HEK293T (cell line): ENCODE measurements at regions of chr11 and their contacts with region 1.

Region 1: DNA sequence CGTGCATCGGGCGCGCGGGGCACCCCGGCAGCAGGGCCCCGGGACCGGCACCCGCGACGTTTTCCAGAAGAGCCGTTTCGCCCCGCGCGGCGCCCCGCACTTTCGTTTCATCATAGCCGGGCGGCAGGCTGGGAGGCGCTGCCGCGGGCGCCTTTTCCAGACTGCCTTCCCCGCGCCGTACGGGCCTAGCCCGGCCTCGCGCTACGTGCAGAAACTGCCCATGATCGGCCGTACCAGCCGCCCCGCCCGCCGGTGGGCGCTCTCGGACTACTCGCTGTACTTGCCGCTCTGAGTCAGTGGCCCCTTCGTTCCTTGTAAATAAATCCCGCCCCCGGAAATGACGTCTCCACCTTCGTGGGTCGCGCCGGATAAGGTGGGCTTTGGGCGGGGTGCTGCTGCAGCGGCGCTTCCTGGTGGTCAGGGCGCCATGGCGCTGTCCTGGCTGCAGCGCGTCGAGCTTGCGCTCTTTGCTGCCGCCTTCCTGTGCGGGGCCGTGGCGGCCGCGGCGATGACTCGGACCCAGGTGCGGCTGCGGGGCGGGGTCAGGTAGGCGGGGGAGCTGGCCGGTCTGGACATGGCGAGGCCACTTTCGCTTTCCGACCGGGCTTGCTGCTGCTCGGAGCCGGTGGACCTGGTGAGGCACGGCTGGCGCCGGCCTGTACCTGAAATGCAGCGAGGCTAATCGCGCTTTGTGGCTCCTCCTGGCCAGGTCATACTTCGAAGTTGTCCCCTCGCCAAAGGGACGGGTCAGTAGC is at the start of gene TMEM179B:
- DNase-seq: peak; percentile 91

Region 2: DNA sequence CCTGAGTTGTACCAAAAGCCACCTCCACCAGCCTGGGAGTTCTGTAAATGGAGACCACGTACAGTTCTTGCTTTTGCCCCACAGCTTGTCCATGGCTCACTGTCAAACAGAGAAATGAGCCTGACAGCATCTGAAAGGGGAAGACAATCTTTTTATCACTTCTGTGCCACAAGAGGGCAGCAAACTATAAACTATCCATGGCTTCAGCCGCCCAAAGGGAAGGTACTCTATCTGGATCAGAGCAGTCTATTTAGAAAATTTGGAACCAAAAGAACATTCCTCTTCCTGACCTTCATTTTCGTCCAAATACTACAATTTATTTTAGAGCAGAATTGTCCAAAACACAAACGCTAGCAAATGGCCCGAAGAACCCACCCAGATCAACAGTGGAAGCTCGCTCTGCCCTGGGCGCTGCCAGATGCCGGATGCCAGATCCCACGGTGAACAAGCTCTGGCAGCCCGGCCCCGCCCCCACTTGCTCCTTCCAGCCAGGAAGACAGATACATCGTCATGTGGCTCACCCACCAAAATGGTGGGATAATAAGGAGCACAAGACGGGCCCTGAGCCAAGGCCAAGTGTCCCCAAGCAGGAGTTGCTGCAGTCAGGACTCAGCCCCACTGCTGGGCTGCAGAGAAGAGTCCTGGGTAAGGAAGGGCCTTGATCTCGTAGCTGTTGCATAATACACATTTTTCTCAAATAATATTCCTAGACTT is 392.2 kb before region 1 on chr11:
- CTCF ChIA-PET with region 1: no interaction called
- POLR2A ChIA-PET with region 1: no interaction called
- DNase-seq: peak; percentile 74

Region 3: GRCh38 chr11:62753736-62754603 is 33.2 kb before region 1 on chr11 and contains the start of gene ZBTB3:
- CTCF ChIA-PET with region 1: interaction called, 6 read pairs
- POLR2A ChIA-PET with region 1: interaction called, 29 read pairs
- DNase-seq: peak; percentile 94

Region 4: GRCh38 chr11:62771144-62772021 is 15.8 kb before region 1 on chr11 and contains the start of gene TAF6L:
- CTCF ChIA-PET with region 1: interaction called, 16 read pairs
- POLR2A ChIA-PET with region 1: interaction called, 17 read pairs
- DNase-seq: peak; percentile 92

Region 5: DNA sequence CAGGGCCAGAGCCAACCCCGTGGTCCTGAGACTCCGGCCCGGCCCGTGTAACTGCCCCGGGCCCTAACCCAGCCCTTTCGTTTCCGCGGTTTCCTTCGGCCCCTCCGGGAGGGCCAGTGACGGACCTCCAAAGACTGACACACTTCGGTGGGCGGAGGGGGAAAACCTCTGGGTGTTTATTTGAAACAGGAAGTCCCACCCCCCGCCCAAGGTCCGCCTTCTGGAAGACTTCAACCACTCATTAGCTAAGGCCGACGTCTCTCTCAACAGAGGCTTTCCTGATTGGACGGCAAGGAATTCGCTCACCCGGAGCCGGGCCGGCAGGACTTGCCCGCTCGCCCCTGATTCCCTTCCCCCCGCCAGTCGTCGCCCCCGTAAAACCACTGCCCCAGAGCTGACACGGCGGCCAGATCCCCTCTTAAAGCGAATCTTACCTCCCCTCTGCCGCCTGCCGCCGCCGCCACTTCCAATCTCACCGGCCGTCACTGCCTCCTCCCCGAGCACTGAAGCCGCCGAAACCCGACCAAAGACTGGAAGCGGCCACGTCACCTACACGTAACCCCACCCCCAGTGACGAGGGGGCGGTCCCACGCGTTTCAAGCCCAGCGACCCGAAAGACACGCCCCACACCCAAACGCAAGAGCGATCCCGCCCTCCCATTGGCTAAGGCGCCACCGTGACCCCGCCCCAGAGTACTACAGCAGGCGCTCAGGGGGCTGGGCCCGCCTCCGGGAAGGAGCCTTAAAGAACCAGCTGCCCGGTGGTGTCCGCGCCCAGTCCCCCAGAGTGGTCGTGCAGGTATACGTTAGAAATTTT is 44.5 kb after region 1 on chr11 and contains the start of gene STX5:
- CTCF ChIA-PET with region 1: interaction called, 7 read pairs
- POLR2A ChIA-PET with region 1: interaction called, 10 read pairs
- DNase-seq: peak; percentile 95

Region 6: GRCh38 chr11:62860835-62861563 is 73.8 kb after region 1 on chr11:
- CTCF ChIA-PET with region 1: interaction called, 22 read pairs
- POLR2A ChIA-PET with region 1: interaction called, 57 read pairs
- DNase-seq: no peak

Region 7: GRCh38 chr11:62880803-62881578 is 93.8 kb after region 1 on chr11 and contains the start of gene SLC3A2:
- CTCF ChIA-PET with region 1: interaction called, 9 read pairs
- POLR2A ChIA-PET with region 1: interaction called, 21 read pairs
- DNase-seq: peak; percentile 82